ENCODE measurements at regions of chr2 and their contacts with region 1.

Region 1: DNA sequence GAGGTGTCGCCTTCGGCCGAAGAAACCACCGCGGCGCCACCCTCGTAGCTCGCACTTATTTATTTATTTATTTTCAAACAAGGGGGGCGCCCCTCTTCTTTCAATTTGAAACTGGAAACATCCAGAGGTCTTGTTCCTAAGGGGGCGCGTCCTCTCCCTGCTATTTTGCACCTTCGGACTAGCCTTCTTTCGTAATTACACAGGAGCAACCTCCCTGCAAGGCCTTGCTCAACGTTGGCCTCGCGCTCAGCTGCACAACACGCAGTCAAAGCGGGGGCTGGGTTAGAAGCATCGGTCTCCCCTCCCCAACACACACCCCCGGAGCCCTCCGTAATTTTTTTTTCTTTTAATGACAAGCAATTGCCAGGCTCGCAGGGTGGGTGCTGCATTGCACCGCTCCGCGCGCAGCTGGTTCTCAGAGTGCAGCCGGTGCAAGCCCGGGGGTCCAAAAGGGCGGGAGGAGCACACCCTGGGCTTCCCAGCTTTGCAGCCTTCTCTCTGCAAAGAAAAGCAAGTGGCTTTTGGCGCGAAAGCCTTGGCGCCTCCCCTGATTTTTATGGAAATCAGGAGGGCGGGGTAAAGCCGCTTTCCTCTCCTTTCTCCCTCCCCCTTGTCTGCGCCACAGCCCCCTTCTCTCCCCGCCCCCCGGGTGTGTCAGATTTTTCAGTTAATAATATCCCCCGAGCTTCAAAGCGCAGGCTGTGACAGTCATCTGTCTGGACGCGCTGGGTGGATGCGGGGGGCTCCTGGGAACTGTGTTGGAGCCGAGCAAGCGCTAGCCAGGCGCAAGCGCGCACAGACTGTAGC is at the start of gene MYCN:
- DNase-seq: peak; percentile 91 to 94
- H3K4me3 ChIP-seq: peak within 1 kb of the TSS; percentile 56
- H3K4me1 ChIP-seq: peaks cover 23% of the 10 kb centered on the region
- H3K27me3 ChIP-seq: no peaks in the 10 kb centered on the region

Region 2: GRCh38 chr2:16281451-16282336 is 341.6 kb after region 1 on chr2:
- in situ Hi-C with region 1: loop called (anchors 5 kb)
- DNase-seq: peak; percentile 51 to 67
- H3K4me3 ChIP-seq: no peak overlapping the region
- H3K4me1 ChIP-seq: no peaks in the 10 kb centered on the region
- H3K27me3 ChIP-seq: peaks cover 5% of the 10 kb centered on the region

Region 3: DNA sequence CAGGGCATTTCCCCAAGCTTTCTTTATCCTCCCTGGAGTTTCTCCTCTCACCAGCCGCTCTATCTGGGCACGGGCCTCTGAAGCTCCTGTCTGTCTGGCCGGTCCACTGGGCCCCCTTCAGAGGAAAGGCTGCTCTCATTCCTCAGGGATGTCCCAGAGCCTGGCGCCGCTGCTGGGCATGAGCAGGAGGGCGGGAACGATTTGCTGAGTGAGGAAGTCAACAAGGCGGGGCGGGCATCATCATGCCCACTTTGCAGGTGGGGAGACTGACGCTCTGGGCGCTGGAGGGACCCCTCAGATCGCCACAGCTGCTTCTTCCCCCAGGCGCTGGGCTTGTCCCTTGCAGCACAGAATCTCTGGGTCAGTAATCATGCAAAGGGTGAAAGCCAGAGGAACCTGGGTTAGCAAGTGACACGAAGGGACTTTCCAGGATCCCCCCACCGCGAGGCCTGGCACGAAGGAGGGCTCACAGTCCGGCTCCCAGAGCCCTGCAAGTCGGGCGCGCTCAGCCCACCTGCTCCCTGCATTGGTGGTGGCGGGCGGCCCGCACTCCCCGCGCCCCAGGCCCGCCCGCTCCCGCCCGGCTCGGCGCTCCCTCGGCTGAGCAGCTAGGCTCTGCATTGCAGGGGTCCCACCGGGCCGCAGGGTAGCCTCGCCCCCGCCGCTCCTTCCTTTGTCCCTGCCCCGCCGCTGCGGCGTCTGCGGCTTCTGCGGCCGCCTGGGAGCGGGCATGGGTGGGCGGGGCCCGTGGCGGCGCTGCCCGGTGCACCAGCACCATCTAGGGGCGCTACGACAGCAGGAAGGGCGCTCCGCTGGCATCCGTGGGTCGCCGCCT is 567.8 kb after region 1 on chr2:
- in situ Hi-C with region 1: loop called (anchors 25 kb)
- DNase-seq: peak; percentile 29 to 71
- H3K4me3 ChIP-seq: peak overlapping the region; percentile 11; the same call in 1 of the 2 replicates
- H3K4me1 ChIP-seq: no peaks in the 10 kb centered on the region
- H3K27me3 ChIP-seq: peaks cover 10% of the 10 kb centered on the region